ENCODE measurements at regions of chr17 and their contacts with region 1.

Region 1: GRCh38 chr17:77186141-77186604 is 45.4 kb downstream of the SEC14L1 start:
- DNase-seq: peak in 2 of 14 experiments; percentile 1 to 21
- ATAC-seq: peak; percentile 17
- H3K4me3 ChIP-seq: no peak overlapping the region
- H3K4me3 Mint-ChIP-seq: no peak overlapping the region
- H3K27ac ChIP-seq: no peak overlapping the region
- H3K27ac Mint-ChIP-seq: no peak overlapping the region
- H3K4me1 ChIP-seq: peaks cover 56% of the 10 kb centered on the region
- H3K4me1 Mint-ChIP-seq: peaks cover 29% of the 10 kb centered on the region
- H3K27me3 ChIP-seq: no peaks in the 10 kb centered on the region
- H3K27me3 Mint-ChIP-seq: no peaks in the 10 kb centered on the region
- CTCF ChIP-seq: no peak

Region 2: DNA sequence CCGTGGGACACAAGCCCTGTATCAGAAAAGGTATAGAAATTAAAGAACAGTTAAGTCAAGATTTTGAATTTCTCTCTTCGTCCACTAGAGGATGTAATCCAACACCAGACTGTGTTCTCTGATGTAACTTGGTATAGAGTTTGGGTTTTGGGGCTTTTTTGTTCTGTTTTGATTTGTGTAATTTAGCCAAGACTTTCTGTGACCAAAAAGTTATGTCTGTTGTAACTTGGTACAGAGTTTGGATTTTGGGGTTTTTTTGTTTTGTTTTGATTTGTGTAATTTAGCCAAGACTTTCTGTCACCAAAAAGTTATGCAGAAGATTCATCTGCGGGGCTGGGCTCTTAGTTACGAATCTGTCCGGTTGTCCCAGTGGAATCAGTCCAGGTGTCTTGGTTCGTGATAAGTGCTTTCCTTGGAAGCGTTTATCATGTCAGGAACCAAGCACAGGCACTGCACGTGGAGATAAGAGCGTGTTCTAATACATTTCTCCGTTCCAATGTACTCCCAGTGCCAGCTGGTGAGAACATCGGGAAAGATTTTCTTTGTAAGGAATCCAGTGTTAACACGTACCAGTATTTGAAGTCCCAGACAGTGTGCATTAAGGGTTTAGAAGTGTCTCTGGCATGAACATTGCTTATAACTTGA is 89.5 kb before region 1 on chr17:
- CTCF ChIA-PET with region 1: no interaction called
- POLR2A ChIA-PET with region 1: no interaction called
- intact Hi-C with region 1: loop called in 1 of 2 experiments (anchors 5 kb)
- DNase-seq: peak in 3 of 14 experiments; percentile 36 to 59 (median 58)
- ATAC-seq: peak; percentile 40
- H3K4me3 ChIP-seq: no peak overlapping the region
- H3K4me3 Mint-ChIP-seq: no peak overlapping the region
- H3K27ac ChIP-seq: no peak overlapping the region
- H3K27ac Mint-ChIP-seq: peak overlapping the region; percentile 94
- H3K4me1 ChIP-seq: peaks cover 21% of the 10 kb centered on the region
- H3K4me1 Mint-ChIP-seq: peaks cover 41% of the 10 kb centered on the region
- H3K27me3 ChIP-seq: no peaks in the 10 kb centered on the region
- H3K27me3 Mint-ChIP-seq: no peaks in the 10 kb centered on the region
- CTCF ChIP-seq: peak; percentile 58